ENCODE measurements at regions of chr14 and their contacts with region 1.

Region 1: GRCh38 chr14:97318380-97318779 is 521.2 kb downstream of the VRK1 start:
- DNase-seq: no peak
- CTCF ChIP-seq: no peak

Region 2: DNA sequence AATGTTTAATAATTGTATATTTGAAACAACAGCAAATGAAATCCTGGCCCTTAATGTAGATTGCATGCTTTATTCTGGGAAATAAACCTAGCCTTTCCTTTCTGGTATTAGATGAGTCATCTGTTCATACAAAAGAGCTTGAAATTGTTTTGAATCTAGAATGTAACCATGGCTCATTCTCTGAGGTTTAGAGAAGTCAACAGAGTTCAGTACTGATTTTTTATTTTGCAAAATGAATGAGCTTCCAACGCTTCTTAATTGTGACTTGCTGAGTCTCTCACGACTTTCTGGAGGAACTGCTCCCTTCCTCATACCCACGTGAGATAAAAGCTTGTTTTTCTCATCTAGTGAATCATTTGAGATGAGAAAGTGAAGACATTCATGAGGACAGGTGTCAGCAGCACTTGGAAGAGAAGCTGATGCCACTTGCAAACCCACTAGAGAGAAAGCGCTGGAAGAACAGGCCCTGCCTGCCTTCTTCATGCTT is 11.6 kb before region 1 on chr14:
- CTCF ChIA-PET with region 1: interaction called, 10 read pairs
- POLR2A ChIA-PET with region 1: no interaction called
- DNase-seq: peak; percentile 11
- CTCF ChIP-seq: no peak